IMR-90 (cell line): ENCODE measurements at regions of chr22 and their contacts with region 1.

Region 1: DNA sequence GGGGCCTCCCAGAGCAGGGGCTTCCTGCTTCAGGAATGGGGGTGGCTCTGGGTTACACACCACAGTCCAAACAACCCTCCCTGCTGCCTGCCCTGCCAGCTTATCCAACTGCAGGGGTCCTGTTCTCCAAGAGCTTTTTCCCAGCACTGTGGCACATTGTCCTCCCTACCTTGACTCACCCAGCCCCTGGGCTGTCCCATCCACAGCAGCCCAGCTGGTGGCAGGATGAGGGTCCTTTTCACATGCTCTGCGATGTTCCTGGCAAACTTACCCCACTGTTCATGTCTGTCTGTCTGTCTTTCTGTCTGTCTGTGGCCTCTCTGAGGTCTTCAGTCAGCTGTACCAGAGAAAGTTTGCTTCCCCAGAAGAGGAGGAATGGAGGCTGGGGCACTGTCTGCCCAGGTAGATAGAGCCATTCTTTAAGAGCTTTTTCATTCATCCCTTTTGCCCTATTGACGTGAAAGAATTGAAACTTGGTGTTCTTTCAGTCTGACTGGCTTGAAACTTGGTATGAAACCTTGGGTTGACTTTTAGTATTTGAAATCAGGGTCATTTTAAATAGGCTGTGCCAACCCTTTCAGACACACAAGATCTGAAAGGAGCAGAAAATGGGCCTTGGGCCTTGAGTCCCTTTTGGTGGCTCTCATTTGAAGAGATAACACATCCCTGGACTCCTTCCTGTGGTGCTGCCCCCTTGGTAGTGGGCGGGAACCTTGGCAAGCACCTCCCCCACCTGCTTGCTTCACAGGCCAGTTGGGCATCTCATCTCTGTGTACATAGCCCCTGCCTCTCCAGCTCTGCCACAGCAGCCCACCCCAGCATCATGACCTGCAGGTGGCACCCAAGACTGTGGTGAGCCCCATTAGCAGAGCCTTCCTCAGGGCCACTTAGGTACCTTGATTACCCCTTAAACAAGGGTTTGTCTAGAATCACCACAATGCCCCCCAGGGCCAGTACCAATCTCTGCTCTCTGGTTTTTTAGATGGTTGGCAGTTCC is 74.6 kb upstream of the SUSD2 start:
- DNase-seq: no peak
- ATAC-seq: no peak; the same call in 1 of the 2 replicates
- H3K4me3 ChIP-seq: no peak overlapping the region
- H3K27ac ChIP-seq: no peak overlapping the region
- H3K4me1 ChIP-seq: peaks cover 8% of the 10 kb centered on the region
- H3K27me3 ChIP-seq: no peaks in the 10 kb centered on the region
- CTCF ChIP-seq: peak; percentile 33
- POLR2A ChIP-seq: no peak
- RAD21 ChIP-seq: peak; percentile 34; the same call in 1 of the 2 replicates

Region 2: DNA sequence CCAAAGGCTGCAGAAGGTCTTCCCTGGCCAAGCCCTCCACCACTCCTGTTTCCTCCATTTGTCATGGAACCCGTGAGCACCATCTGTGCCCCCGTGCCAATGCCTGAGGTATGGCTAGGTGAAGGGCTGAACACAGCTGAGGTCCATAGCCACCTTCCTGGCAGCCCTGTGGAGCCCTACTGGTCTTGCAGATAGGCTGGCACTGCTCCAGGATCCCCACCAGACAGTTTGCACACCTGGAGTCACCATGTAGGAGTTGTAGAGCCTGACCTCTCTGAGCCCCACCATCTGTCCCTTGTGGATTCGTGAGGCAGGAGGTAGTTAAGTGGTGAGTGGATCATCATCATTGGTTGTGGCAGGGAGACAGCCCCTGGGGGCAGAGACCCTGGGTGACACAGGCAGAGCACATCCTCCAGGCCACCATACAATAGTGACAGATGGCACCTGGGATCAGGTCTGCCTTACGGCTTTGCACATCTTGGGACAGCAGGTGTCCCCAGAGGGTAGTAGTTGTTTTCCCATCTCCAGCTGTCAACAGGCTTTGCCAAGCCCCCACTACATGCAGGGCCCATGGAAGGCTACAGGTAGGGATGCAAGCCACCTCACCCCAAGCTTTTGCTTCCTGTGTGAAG is 22.1 kb after region 1 on chr22:
- CTCF ChIA-PET with region 1: interaction called, 9 read pairs
- POLR2A ChIA-PET with region 1: no interaction called
- dilution Hi-C with region 1: no loop called
- in situ Hi-C with region 1: no loop called
- intact Hi-C with region 1: loop called (anchors 2 kb)
- DNase-seq: no peak
- ATAC-seq: no peak
- H3K4me3 ChIP-seq: no peak overlapping the region
- H3K27ac ChIP-seq: no peak overlapping the region
- H3K4me1 ChIP-seq: peaks cover 1% of the 10 kb centered on the region; the same call in 1 of the 2 replicates
- H3K27me3 ChIP-seq: no peaks in the 10 kb centered on the region
- CTCF ChIP-seq: no peak
- POLR2A ChIP-seq: no peak
- RAD21 ChIP-seq: no peak

Region 3: DNA sequence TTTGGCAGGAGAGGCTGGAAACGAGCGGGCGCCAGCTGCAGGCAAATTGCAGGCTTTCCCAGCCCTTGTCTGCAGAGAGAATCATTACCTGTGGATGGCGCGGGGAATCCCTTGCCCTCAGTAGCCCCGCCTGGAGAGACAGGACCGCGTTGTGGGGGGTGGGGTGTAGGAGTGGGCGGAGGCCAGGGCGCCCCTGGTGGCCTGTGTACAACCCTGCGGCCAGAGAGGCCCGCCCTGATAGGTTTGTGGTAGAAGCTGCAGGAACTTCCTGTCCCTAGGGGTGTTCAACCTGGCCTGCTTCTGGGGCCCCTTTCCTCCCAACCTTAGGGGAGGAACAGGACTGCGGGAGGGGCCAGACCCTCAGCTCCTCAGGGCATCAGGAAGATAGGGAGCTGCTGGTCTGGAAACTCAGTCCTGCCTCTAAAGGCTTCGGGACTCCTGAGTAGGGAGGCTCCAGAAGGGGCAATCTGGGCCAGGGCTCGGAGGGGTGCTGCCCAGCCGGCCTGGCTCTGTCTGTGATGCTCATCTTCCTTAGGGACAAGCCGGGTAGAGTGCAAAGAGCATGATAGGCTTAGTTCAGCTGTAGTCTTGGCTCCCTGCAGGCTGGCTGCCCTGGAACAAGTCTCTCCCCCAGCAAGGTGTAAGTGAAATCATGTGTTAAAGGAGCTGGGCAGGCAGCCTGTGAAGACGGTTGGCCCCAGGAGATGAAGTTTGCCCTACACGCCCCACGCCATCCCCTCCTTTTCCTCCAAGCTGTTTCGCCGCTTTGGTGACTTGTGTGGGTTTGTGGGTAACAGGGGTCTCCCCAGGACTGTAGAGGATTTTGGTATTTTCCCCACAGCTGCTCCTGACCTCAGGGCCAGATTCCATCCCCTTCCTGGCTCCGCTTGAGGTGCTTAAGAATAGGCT is 50.5 kb after region 1 on chr22:
- CTCF ChIA-PET with region 1: interaction called, 10 read pairs
- POLR2A ChIA-PET with region 1: no interaction called
- dilution Hi-C with region 1: no loop called
- in situ Hi-C with region 1: no loop called
- intact Hi-C with region 1: loop called (anchors 5 kb)
- DNase-seq: peak; percentile 64
- ATAC-seq: peak; percentile 81
- H3K4me3 ChIP-seq: peak overlapping the region; percentile 83
- H3K27ac ChIP-seq: peak overlapping the region; percentile 84
- H3K4me1 ChIP-seq: peaks cover 36% of the 10 kb centered on the region
- H3K27me3 ChIP-seq: no peaks in the 10 kb centered on the region
- CTCF ChIP-seq: peak; percentile 89
- POLR2A ChIP-seq: no peak
- RAD21 ChIP-seq: peak; percentile 41

Region 4: GRCh38 chr22:24170248-24170630 is 63.6 kb after region 1 on chr22:
- CTCF ChIA-PET with region 1: interaction called, 19 read pairs
- POLR2A ChIA-PET with region 1: no interaction called
- dilution Hi-C with region 1: no loop called
- in situ Hi-C with region 1: loop called (anchors 5 kb)
- intact Hi-C with region 1: loop called (anchors 1 kb)
- DNase-seq: no peak
- ATAC-seq: no peak
- H3K4me3 ChIP-seq: no peak overlapping the region
- H3K27ac ChIP-seq: no peak overlapping the region
- H3K4me1 ChIP-seq: peaks cover 1% of the 10 kb centered on the region; the same call in 1 of the 2 replicates
- H3K27me3 ChIP-seq: no peaks in the 10 kb centered on the region
- CTCF ChIP-seq: no peak
- POLR2A ChIP-seq: no peak
- RAD21 ChIP-seq: no peak

Region 5: GRCh38 chr22:24175160-24175808 is 68.6 kb after region 1 on chr22:
- CTCF ChIA-PET with region 1: interaction called, 19 read pairs
- POLR2A ChIA-PET with region 1: no interaction called
- dilution Hi-C with region 1: no loop called
- in situ Hi-C with region 1: loop called (anchors 5 kb)
- intact Hi-C with region 1: loop called (anchors 1 kb)
- DNase-seq: peak; percentile 72
- ATAC-seq: peak; percentile 90
- H3K4me3 ChIP-seq: no peak overlapping the region
- H3K27ac ChIP-seq: no peak overlapping the region
- H3K4me1 ChIP-seq: no peaks in the 10 kb centered on the region
- H3K27me3 ChIP-seq: no peaks in the 10 kb centered on the region
- CTCF ChIP-seq: peak; percentile 89
- POLR2A ChIP-seq: no peak
- RAD21 ChIP-seq: peak; percentile 92

Region 6: DNA sequence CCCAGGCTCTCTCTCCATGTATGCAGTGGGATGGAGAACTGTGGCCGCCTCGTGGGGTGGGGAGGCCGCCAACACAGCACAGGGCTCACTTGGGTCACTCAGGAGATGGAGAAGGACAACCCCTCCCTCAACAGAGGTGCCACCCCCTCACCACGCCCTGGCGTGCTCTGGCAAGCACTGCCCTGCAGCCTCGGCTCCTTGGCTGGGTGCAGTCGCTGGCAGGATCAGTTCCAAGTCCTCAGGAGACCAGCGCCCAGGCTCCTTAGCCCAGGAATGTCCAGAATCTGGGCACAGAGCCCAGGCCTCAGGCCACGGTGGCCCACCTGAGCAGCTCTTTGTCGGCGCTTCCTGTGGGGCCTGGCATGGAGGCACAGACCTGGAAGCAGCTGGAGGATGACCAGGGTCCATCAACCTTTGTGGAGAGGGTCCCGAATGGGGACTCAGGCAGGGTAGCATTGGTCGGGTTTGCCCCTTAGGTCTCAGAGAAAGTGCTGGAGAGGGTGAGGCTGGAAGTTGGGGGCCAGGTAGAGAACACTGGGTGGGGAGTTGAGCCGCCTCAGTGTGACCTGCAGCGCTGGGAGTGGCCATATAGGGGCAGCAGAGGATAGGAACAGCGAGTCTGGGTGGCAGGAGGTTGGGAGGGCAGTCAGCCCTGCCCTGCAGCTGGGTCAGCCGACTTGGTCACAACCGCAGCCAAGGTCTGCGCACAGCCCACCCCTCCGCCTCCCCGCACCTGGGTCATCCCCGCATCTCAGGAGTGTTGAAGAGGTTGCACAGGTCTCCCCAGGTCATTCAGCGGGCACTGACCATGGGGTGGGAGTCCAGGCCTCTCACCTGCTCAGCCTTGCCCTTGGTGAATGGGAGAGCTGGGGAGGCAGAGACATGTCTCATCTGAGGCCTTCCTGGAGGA is 82.8 kb after region 1 on chr22:
- CTCF ChIA-PET with region 1: no interaction called
- POLR2A ChIA-PET with region 1: no interaction called
- dilution Hi-C with region 1: no loop called
- in situ Hi-C with region 1: no loop called
- intact Hi-C with region 1: no loop called
- DNase-seq: peak; percentile 50
- ATAC-seq: peak; percentile 100
- H3K4me3 ChIP-seq: no peak overlapping the region
- H3K27ac ChIP-seq: peak overlapping the region; percentile 16
- H3K4me1 ChIP-seq: peaks cover 10% of the 10 kb centered on the region
- H3K27me3 ChIP-seq: no peaks in the 10 kb centered on the region
- CTCF ChIP-seq: peak; percentile 98
- POLR2A ChIP-seq: peak; percentile 61; the same call in 1 of the 2 replicates
- RAD21 ChIP-seq: peak; percentile 99

Region 7: DNA sequence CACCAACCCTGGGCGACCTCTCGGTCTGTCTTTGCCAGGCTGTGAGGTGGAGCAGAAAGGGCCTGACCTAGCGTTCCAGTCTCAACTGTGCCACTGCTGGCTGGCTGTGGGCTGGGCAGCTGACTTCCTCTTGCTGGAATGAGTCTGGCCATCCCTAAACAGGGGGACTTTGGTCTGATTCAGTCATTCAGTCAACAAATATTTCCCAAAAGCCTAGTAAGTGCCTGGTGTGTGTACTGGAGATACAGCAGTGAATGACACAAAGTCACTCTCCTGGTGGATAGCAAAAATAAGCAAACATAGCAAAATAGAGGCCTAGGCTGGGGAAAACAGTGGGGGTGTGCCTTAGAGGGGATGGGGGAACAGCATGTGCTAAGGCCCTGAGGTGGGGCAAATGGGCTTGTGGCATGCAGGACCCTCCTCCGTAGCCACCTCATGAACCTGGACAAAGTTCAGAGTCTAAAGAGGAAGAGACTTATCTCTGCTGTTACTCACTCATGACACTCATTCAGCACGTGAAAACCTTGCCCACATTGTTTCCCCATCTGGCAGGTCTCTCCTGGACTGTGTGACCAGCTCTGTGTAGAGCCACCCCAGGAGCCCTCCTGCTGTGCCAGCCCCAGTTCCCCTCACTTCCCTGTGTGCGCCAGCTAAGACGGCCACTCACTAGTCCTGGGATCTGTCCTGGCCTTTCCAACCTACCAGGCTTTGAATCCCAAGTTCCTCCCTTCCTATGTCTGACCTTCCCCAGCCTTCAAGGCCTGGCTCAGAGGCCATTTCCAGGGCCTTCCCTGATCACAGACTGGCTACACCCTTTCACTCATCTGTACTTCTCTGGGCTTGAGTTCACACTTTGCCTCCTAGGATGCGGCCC is 443.6 kb after region 1 on chr22:
- CTCF ChIA-PET with region 1: no interaction called
- POLR2A ChIA-PET with region 1: no interaction called
- dilution Hi-C with region 1: no loop called
- in situ Hi-C with region 1: no loop called
- intact Hi-C with region 1: no loop called
- DNase-seq: no peak
- ATAC-seq: no peak
- H3K4me3 ChIP-seq: no peak overlapping the region
- H3K27ac ChIP-seq: no peak overlapping the region
- H3K4me1 ChIP-seq: peaks cover 7% of the 10 kb centered on the region
- H3K27me3 ChIP-seq: no peaks in the 10 kb centered on the region
- CTCF ChIP-seq: no peak
- POLR2A ChIP-seq: no peak
- RAD21 ChIP-seq: no peak